Activated CD4-positive, alpha-beta T cell treated with anti-CD3 and anti-CD28 coated beads for 36 hours (primary cell): ENCODE measurements at regions of chr11 and their contacts with region 1.

Region 1: DNA sequence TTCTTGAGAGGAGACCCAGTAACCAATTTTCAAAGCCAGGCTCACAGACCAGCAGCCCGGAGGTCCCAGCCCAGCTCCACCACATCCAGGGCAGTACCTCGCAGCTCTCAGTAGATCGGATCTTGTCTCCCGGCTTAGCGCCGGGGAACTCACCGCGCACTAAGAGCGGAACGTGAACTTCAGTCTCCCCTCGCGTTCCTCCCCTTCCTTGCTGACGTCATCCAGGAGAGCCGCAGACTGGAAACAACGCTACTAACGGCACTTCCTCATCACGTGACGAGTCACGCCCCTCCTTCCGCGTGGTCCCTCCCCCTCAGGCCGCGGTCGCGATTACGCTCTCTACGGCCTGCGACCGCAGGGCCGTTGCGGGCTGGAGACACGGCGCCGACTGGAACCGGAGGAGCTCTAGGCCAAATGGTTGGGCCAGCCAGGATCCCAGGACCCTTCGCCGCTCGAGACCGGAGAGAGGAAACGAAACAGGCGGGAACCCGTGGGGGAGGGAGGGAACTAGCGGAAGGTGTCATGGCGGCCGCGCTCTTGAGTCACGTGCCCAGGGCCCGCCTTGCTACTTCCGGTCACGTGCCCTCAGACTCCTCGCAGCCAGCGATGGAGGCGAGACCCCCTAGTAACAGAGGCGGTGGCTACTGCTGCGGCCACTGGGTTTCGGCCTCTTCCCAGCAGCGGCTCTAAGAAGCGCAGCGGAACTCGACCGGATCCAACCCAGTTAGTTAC is at the starts of genes GTF2H1 and HPS5:
- DNase-seq: peak; percentile 97
- ATAC-seq: peak; percentile 89
- H3K4me3 Mint-ChIP-seq: peak within 1 kb of the TSS; percentile 92
- H3K27ac Mint-ChIP-seq: peak within 1 kb of the TSS; percentile 100
- H3K4me1 Mint-ChIP-seq: peaks cover 59% of the 10 kb centered on the region
- H3K27me3 Mint-ChIP-seq: no peaks in the 10 kb centered on the region
- total RNA-seq, gene GTF2H1: 48.2 to 57.9 TPM
- total RNA-seq, gene HPS5: 14.3 to 16.1 TPM

Region 2: GRCh38 chr11:17207317-17208258 is 1114.6 kb before region 1 on chr11 and contains the start of gene PIK3C2A:
- CTCF ChIA-PET with region 1: no interaction called
- POLR2A ChIA-PET with region 1: no interaction called
- intact Hi-C with region 1: loop called in 1 of 2 experiments (anchors 2 kb)
- DNase-seq: peak; percentile 97
- ATAC-seq: peak; percentile 97
- H3K4me3 Mint-ChIP-seq: peak within 1 kb of the TSS; percentile 91
- H3K27ac Mint-ChIP-seq: peak within 1 kb of the TSS; percentile 97
- H3K4me1 Mint-ChIP-seq: peaks cover 40% of the 10 kb centered on the region
- H3K27me3 Mint-ChIP-seq: no peaks in the 10 kb centered on the region
- total RNA-seq, gene PIK3C2A: 23.3 to 27.3 TPM

Region 3: GRCh38 chr11:18105802-18106574 is 216.2 kb before region 1 on chr11 and contains the start of gene SAAL1:
- CTCF ChIA-PET with region 1: interaction called, 4 read pairs
- POLR2A ChIA-PET with region 1: interaction called, 10 read pairs
- intact Hi-C with region 1: loop called (anchors 1 to 5 kb)
- DNase-seq: peak; percentile 95
- ATAC-seq: peak; percentile 97
- H3K4me3 Mint-ChIP-seq: peak within 1 kb of the TSS; percentile 82
- H3K27ac Mint-ChIP-seq: peak within 1 kb of the TSS; percentile 85
- H3K4me1 Mint-ChIP-seq: peaks cover 37% of the 10 kb centered on the region
- H3K27me3 Mint-ChIP-seq: peaks cover 3% of the 10 kb centered on the region
- total RNA-seq, gene SAAL1: 37.4 to 40.9 TPM

Region 4: DNA sequence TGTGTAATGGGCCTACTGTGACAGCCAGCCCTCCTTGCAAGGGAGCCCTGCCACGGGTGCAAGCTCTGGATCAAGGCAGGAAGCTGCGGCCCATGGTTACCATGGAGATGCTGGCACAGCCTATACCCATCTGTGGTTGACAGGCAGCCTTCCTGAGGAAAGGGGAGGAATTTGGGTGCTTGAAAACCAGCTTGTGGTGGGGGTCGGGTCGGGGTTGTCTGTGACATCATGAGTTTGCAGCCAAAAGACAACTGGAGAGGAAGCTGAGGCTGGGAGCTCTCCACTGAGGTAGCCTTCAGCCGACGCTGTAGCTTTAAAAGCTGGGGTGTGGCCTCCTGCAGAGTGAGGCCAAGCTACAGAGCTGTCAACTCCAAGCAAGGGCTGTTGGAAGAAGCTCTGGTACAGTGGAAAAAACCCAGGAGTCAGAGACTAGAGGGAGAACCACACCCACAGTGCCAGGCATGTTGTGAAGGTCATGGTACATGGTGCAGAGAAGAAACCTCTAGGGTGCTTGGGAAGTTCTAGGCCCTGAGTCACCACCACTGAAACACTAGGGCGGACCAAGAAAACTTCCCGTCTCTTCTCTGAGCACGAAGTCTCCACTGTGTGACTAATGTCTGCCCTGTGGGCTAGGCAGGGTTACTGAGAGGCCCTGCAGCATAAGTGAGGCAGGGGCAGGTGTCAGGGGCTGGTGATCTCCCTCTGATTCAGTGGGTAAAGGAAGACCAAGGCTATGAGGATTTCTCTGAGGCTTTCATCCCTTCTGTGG is 61.4 kb after region 1 on chr11:
- CTCF ChIA-PET with region 1: interaction called, 6 read pairs
- POLR2A ChIA-PET with region 1: interaction called, 5 read pairs
- intact Hi-C with region 1: loop called (anchors 1 kb)
- DNase-seq: peak; percentile 89
- ATAC-seq: peak; percentile 96
- H3K4me3 Mint-ChIP-seq: peak overlapping the region; percentile 59
- H3K27ac Mint-ChIP-seq: peak overlapping the region; percentile 98
- H3K4me1 Mint-ChIP-seq: peaks cover 42% of the 10 kb centered on the region
- H3K27me3 Mint-ChIP-seq: no peaks in the 10 kb centered on the region

Region 5: GRCh38 chr11:18588297-18589252 is 266.4 kb after region 1 on chr11 and contains the start of gene UEVLD:
- CTCF ChIA-PET with region 1: no interaction called
- POLR2A ChIA-PET with region 1: no interaction called
- intact Hi-C with region 1: loop called in 1 of 2 experiments (anchors 2 kb)
- DNase-seq: peak; percentile 79
- ATAC-seq: peak; percentile 54
- H3K4me3 Mint-ChIP-seq: no peak within 1 kb of the TSS
- H3K27ac Mint-ChIP-seq: no peak within 1 kb of the TSS
- H3K4me1 Mint-ChIP-seq: peaks cover 12% of the 10 kb centered on the region
- H3K27me3 Mint-ChIP-seq: no peaks in the 10 kb centered on the region
- total RNA-seq, gene UEVLD: 14.3 to 16.0 TPM

Region 6: DNA sequence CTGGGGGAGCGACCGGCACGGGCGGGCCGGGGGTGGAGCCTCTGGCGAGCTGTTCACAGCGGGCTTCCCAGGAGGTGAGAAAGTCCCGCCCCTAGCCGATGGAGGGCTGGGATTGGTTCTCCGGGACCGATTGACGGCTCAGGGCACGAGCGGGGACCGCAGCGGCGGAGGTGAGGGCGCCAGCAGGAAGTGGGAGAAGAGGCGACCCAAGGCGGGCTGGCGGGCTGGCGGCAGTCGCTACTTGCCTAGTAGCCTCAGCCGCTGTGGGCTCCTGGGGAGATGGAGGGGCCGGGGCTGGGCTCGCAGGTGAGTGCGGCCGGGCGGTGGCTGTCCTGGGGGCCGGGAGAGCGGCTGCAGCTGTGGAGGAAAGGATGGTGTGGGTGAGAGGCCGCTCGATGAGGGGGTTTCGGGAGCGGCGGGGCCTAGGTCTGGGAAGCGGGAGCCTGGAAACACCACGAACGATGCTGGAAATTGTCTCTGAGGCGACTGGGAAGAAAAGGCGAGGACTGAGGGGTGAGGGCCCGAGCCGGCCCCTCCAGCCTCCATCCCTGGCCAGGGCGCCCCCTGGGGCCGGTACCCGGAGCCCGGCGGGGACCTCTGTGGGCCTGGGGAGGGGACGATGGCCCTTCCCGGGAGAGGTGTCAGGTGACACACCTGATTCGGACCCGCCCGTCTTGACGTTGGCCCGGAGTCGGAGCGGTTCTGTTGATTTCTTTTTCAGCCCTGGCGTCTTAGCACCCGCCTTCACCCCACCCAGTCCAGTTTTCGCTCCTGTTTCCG is 795.0 kb after region 1 on chr11 and contains the start of gene ZDHHC13:
- CTCF ChIA-PET with region 1: no interaction called
- POLR2A ChIA-PET with region 1: no interaction called
- intact Hi-C with region 1: loop called in 1 of 2 experiments (anchors 10 kb)
- DNase-seq: peak; percentile 97
- ATAC-seq: peak; percentile 99
- H3K4me3 Mint-ChIP-seq: peak within 1 kb of the TSS; percentile 89
- H3K27ac Mint-ChIP-seq: peak within 1 kb of the TSS; percentile 87
- H3K4me1 Mint-ChIP-seq: peaks cover 51% of the 10 kb centered on the region
- H3K27me3 Mint-ChIP-seq: no peaks in the 10 kb centered on the region
- total RNA-seq, gene ZDHHC13: 22.9 to 25.9 TPM